Dendritic cell treated with granulocyte-macrophage colony-stimulating factor and Interleukin-4, amounts not matched to agents 40 ng/mL and 50 ng/mL, for 4 days (primary cell): ENCODE measurements at regions of chr18 and their contacts with region 1.

Region 1: GRCh38 chr18:46660955-46661749 is 4.1 kb upstream of the LOXHD1 start:
- H3K4me3 Mint-ChIP-seq: no peak overlapping the region
- H3K27ac Mint-ChIP-seq: no peak overlapping the region
- H3K4me1 Mint-ChIP-seq: no peaks in the 10 kb centered on the region
- H3K27me3 Mint-ChIP-seq: peaks cover 5% of the 10 kb centered on the region

Region 2: GRCh38 chr18:46281185-46282176 is 379.7 kb before region 1 on chr18:
- intact Hi-C with region 1: loop called (anchors 1 kb)
- H3K4me3 Mint-ChIP-seq: no peak overlapping the region
- H3K27ac Mint-ChIP-seq: no peak overlapping the region
- H3K4me1 Mint-ChIP-seq: peaks cover 11% of the 10 kb centered on the region
- H3K27me3 Mint-ChIP-seq: no peaks in the 10 kb centered on the region

Region 3: DNA sequence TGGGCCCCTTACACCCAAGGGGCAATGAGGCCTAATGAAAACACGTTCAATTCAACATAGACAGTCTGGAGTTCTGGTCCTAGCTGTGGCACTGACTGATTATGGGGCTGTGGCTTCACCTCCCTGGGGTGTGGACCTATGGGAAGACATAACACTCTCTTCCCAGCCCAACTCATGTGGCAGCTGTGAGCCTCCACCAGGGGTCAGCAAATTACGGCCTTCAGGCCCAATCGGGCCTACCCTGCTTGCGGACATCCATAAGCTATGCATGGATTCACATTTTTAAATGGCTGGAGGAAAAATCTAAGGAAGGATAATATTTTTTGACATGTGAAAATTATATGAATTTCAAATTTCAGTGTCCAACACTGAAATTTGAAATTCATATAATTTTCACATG is 105.4 kb before region 1 on chr18:
- intact Hi-C with region 1: loop called (anchors 1 kb)
- H3K4me3 Mint-ChIP-seq: no peak overlapping the region
- H3K27ac Mint-ChIP-seq: no peak overlapping the region
- H3K4me1 Mint-ChIP-seq: no peaks in the 10 kb centered on the region
- H3K27me3 Mint-ChIP-seq: no peaks in the 10 kb centered on the region

Region 4: GRCh38 chr18:46939337-46939963 is 278.3 kb after region 1 on chr18:
- intact Hi-C with region 1: no loop called
- H3K4me3 Mint-ChIP-seq: no peak overlapping the region
- H3K27ac Mint-ChIP-seq: no peak overlapping the region
- H3K4me1 Mint-ChIP-seq: no peaks in the 10 kb centered on the region
- H3K27me3 Mint-ChIP-seq: no peaks in the 10 kb centered on the region